Naive thymus-derived CD4-positive, alpha-beta T cell (primary cell): ENCODE measurements at regions of chr17 and their contacts with region 1.

Region 1: GRCh38 chr17:76714822-76715495 is 4.2 kb upstream of the MXRA7 start:
- DNase-seq: peak; percentile 60 to 83 (median 70)
- ATAC-seq: peak; percentile 18
- H3K4me3 ChIP-seq: no peak overlapping the region
- H3K4me3 Mint-ChIP-seq: peak overlapping the region in 5 of 10 donors; percentile 1 to 41 (median 2)
- H3K27ac ChIP-seq: peak overlapping the region; percentile 32
- H3K27ac Mint-ChIP-seq: peak overlapping the region; percentile 22 to 82 (median 75)
- H3K4me1 ChIP-seq: peaks cover 14 to 30% of the 10 kb centered on the region in 2 donors
- H3K4me1 Mint-ChIP-seq: peaks cover 27 to 48% (median 41%) of the 10 kb centered on the region in 7 donors
- H3K27me3 ChIP-seq: no peaks in the 10 kb centered on the region
- H3K27me3 Mint-ChIP-seq: peaks cover 0 to 2% (median 0%) of the 10 kb centered on the region in 5 donors

Region 2: DNA sequence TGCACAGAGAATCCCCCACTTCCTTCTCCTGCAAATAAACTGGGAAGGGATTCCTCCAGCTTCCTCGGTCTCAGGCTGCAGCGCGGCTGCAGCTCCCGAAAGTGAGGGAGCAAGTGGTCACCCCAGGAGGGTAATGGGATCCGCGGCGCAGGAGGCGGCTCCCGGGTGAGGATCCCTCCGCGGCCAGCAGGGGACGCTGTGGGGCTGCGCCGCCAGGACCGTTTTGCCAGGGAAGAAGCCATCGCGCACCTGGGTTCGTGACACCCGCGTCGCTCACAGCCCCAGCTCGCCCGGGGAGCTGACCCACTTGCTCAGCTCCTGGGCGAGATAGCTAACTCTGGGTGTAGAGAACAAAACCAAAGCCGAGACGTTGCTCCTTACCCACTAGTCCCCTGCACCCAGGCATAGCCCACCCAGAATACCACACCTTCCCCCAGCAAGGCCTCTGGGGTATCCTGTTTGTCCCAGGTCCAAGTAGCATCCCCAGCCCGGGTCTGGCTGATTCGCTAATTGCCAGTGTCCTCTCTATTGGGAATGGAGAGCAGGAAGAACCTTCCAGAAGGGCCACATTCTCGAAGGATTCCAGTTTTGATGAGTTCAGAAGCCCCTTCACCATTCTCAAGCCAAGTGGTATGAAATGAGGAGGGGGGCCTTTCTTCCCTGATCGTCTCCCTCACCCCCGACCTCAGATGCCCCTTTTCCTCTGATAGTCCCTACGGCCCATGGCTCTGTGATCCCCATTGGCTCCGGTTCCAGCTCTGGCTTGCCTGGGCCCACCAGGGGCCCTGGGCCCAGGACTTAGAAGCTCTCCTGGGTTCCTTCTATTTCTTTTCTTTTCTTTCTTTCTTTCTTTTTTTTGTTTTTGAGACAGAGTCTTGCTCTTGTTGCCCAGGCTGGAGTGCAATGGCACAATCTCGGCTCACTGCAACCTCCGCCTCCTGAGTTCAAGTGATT is 191.6 kb before region 1 on chr17:
- CTCF ChIA-PET with region 1: interaction called, 10 read pairs
- POLR2A ChIA-PET with region 1: no interaction called
- intact Hi-C with region 1: loop called in 1 of 2 experiments (anchors 1 kb)
- DNase-seq: peak; percentile 66 to 89 (median 79)
- ATAC-seq: peak; percentile 92
- H3K4me3 ChIP-seq: no peak overlapping the region
- H3K4me3 Mint-ChIP-seq: peak overlapping the region in 8 of 10 donors; percentile 10 to 71 (median 36)
- H3K27ac ChIP-seq: no peak overlapping the region
- H3K27ac Mint-ChIP-seq: peak overlapping the region in 8 of 9 donors; percentile 40 to 93 (median 72)
- H3K4me1 ChIP-seq: peaks cover 11 to 22% of the 10 kb centered on the region in 2 donors
- H3K4me1 Mint-ChIP-seq: peaks cover 16 to 31% (median 28%) of the 10 kb centered on the region in 7 donors
- H3K27me3 ChIP-seq: no peaks in the 10 kb centered on the region
- H3K27me3 Mint-ChIP-seq: peaks cover 0 to 11% (median 0%) of the 10 kb centered on the region in 5 donors

Region 3: GRCh38 chr17:76671123-76671911 is 43.6 kb before region 1 on chr17:
- CTCF ChIA-PET with region 1: no interaction called
- POLR2A ChIA-PET with region 1: interaction called, 7 read pairs
- intact Hi-C with region 1: loop called (anchors 1 to 2 kb)
- DNase-seq: peak; percentile 90 to 99 (median 98)
- ATAC-seq: peak; percentile 99
- H3K4me3 ChIP-seq: peak overlapping the region; percentile 76
- H3K4me3 Mint-ChIP-seq: peak overlapping the region; percentile 81 to 98 (median 92)
- H3K27ac ChIP-seq: peak overlapping the region; percentile 84
- H3K27ac Mint-ChIP-seq: peak overlapping the region; percentile 88 to 99 (median 96)
- H3K4me1 ChIP-seq: peaks cover 19 to 26% of the 10 kb centered on the region in 2 donors
- H3K4me1 Mint-ChIP-seq: peaks cover 20 to 43% (median 31%) of the 10 kb centered on the region in 7 donors
- H3K27me3 ChIP-seq: no peaks in the 10 kb centered on the region
- H3K27me3 Mint-ChIP-seq: peaks cover 0 to 10% (median 0%) of the 10 kb centered on the region in 5 donors

Region 4: GRCh38 chr17:76687308-76688164 is 27.4 kb before region 1 on chr17:
- CTCF ChIA-PET with region 1: no interaction called
- POLR2A ChIA-PET with region 1: no interaction called
- intact Hi-C with region 1: no loop called
- DNase-seq: no peak
- ATAC-seq: no peak
- H3K4me3 ChIP-seq: no peak overlapping the region
- H3K4me3 Mint-ChIP-seq: no peak overlapping the region
- H3K27ac ChIP-seq: no peak overlapping the region
- H3K27ac Mint-ChIP-seq: no peak overlapping the region
- H3K4me1 ChIP-seq: no peaks in the 10 kb centered on the region
- H3K4me1 Mint-ChIP-seq: no peaks in the 10 kb centered on the region
- H3K27me3 ChIP-seq: no peaks in the 10 kb centered on the region
- H3K27me3 Mint-ChIP-seq: peaks cover 0 to 4% (median 0%) of the 10 kb centered on the region in 5 donors

Region 5: GRCh38 chr17:76843703-76844484 is 128.9 kb after region 1 on chr17:
- CTCF ChIA-PET with region 1: interaction called, 3 read pairs
- POLR2A ChIA-PET with region 1: no interaction called
- intact Hi-C with region 1: loop called in 1 of 2 experiments (anchors 1 kb)
- DNase-seq: no peak
- ATAC-seq: no peak
- H3K4me3 ChIP-seq: no peak overlapping the region
- H3K4me3 Mint-ChIP-seq: no peak overlapping the region
- H3K27ac ChIP-seq: no peak overlapping the region
- H3K27ac Mint-ChIP-seq: no peak overlapping the region
- H3K4me1 ChIP-seq: peaks cover 2 to 5% of the 10 kb centered on the region in 2 donors
- H3K4me1 Mint-ChIP-seq: peaks cover 9 to 25% (median 17%) of the 10 kb centered on the region in 7 donors
- H3K27me3 ChIP-seq: peaks cover 0 to 12% of the 10 kb centered on the region in 2 donors
- H3K27me3 Mint-ChIP-seq: peaks cover 54 to 72% (median 62%) of the 10 kb centered on the region in 5 donors

Region 6: GRCh38 chr17:77068915-77069314 is 354.0 kb after region 1 on chr17:
- CTCF ChIA-PET with region 1: no interaction called
- POLR2A ChIA-PET with region 1: no interaction called
- intact Hi-C with region 1: loop called in 1 of 2 experiments (anchors 1 kb)
- DNase-seq: no peak
- ATAC-seq: no peak
- H3K4me3 ChIP-seq: no peak overlapping the region
- H3K4me3 Mint-ChIP-seq: no peak overlapping the region
- H3K27ac ChIP-seq: no peak overlapping the region
- H3K27ac Mint-ChIP-seq: no peak overlapping the region
- H3K4me1 ChIP-seq: no peaks in the 10 kb centered on the region
- H3K4me1 Mint-ChIP-seq: peaks cover 0 to 6% (median 0%) of the 10 kb centered on the region in 7 donors
- H3K27me3 ChIP-seq: no peaks in the 10 kb centered on the region
- H3K27me3 Mint-ChIP-seq: peaks cover 18 to 42% (median 29%) of the 10 kb centered on the region in 5 donors